Posterior vena cava (tissue), 2 donors: ENCODE measurements at regions of chr4 and their contacts with region 1.

Region 1: GRCh38 chr4:176755613-176756012 is 37.1 kb downstream of the VEGFC start:
- DNase-seq: no peak

Region 2: GRCh38 chr4:176789955-176790354 is 34.3 kb after region 1 on chr4:
- intact Hi-C with region 1: loop called in 1 of 2 experiments (anchors 1 kb)
- DNase-seq: no peak